Cardiac septum (tissue), 1 donor: ENCODE measurements at regions of chr12 and their contacts with region 1.

Region 1: GRCh38 chr12:91178139-91178561 is 4.5 kb downstream of the DCN start:
- DNase-seq: no peak

Region 2: DNA sequence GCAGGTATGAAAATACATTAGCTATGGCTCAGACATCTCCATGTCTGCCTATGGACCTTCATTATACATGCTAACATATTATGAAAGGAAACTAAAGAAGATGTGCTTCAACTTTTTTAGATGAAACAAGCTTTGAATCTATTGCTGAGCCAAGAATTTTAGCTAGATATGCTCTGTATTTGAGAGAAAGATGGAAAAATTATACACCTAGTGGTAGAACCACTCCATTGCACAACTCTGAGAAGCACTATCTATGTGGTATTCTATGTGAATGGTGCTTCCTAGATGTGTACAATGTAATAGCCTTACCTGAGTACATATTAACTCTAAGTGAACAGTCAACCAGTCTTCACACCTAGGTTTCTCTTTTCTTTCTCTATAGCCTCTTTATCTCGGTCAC is 190.6 kb before region 1 on chr12:
- intact Hi-C with region 1: loop called (anchors 10 kb)
- DNase-seq: no peak

Region 3: GRCh38 chr12:91222746-91223145 is 44.6 kb after region 1 on chr12:
- intact Hi-C with region 1: loop called (anchors 5 kb)
- DNase-seq: no peak

Region 4: GRCh38 chr12:91240386-91241095 is 62.4 kb after region 1 on chr12:
- intact Hi-C with region 1: loop called (anchors 5 kb)
- DNase-seq: no peak